ENCODE measurements at regions of chr19 and their contacts with region 1.

Region 1: DNA sequence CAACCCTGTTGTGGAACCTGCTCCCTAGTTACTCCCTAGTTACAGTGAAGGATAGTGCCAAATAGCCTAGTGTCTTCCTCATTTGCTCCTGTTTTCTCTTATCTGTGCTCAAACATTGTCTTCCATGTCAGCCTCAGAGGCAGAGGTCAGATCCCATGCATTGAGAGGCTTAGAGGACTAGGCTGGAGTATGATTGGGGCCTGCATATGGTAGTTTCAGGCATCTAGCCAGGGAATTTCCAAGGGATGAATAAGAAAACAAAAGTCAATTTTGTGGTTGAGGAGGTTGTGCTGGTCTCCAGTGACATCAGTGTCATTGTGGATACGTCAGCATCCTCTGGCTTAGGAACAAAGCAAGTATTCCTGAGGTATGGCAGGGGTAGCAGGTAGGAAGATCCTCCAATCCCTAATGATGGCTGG is 9.4 kb downstream of the ZNF546 start:
- DNase-seq: no peak
- H3K4me3 ChIP-seq: no peak overlapping the region
- H3K27ac ChIP-seq: no peak overlapping the region
- H3K4me1 ChIP-seq: peaks cover 0 to 16% (median 5%) of the 10 kb centered on the region in 4 donors
- H3K27me3 ChIP-seq: no peaks in the 10 kb centered on the region
- CTCF ChIP-seq: no peak
- EP300 ChIP-seq: no peak
- POLR2A ChIP-seq: no peak

Region 2: DNA sequence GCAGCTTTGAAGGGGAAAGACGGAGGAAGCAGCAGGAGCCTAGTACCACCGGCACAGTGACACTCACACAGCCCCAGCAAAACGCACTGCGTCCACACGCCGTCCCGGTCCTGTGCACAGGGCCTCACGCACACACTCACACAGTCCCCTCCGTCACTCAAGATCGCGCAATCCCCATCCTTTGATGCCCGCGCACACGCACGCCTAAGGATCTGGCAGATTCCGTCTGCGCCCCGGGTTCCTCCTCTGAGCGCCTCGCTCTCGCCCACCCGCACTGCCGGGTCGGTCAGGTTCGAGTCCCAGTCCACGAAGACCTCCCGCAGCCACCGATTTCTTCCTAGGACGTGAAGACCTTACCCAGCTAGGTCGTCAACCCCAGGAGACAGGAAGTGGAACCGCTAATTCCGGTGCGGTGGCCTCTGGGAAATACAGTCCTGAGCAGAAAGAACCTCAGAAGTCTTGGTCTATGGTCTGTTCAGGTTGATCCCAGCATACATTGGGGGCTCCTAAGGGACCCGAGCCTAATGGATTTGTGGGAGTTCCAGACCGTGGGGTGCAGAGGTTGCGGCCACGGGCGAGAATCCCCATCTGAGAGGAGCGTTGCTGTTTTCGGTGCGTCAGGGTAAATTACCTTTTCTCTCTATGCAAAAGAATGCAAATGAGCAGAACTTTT is 49.7 kb after region 1 on chr19 and contains the start of gene ZNF780B:
- intact Hi-C with region 1: no loop called
- DNase-seq: peak; percentile 92
- H3K4me3 ChIP-seq: peak within 1 kb of the TSS; percentile 63 to 85 (median 75)
- H3K27ac ChIP-seq: peak within 1 kb of the TSS; percentile 77 to 79 (median 78)
- H3K4me1 ChIP-seq: peaks cover 13 to 23% (median 20%) of the 10 kb centered on the region in 4 donors
- H3K27me3 ChIP-seq: no peaks in the 10 kb centered on the region
- CTCF ChIP-seq: peak in 1 of 3 experiments; percentile 4
- EP300 ChIP-seq: no peak
- POLR2A ChIP-seq: no peak
- total RNA-seq, gene ZNF780B: 8.6 to 23.3 (median 18.0) TPM

Region 3: DNA sequence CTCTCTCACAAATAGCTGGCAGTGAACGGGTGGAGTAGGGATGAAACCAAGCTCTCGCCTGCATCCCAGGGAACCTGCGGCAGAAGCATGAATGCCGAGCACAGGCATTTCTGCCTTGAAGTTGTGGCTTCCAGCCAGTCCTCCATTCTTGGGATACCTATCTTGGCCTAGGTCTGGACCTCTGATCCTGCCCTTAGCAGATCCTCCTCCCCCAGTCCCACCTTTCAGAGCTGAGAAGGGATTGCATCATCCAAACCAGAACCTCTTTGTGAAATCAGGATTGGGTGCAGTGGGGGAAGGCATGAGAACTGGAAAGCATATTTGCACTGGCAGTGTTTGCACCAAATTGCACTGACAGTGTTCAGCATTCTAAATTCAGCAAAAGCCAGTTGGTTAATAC is 78.7 kb after region 1 on chr19:
- intact Hi-C with region 1: loop called (anchors 5 kb)
- DNase-seq: no peak
- H3K4me3 ChIP-seq: no peak overlapping the region
- H3K27ac ChIP-seq: no peak overlapping the region
- H3K4me1 ChIP-seq: peaks cover 9 to 16% (median 12%) of the 10 kb centered on the region in 4 donors
- H3K27me3 ChIP-seq: no peaks in the 10 kb centered on the region
- CTCF ChIP-seq: no peak
- EP300 ChIP-seq: no peak
- POLR2A ChIP-seq: no peak